Ascending aorta (tissue), 2 donors: ENCODE measurements at regions of chr16 and their contacts with region 1.

Region 1: DNA sequence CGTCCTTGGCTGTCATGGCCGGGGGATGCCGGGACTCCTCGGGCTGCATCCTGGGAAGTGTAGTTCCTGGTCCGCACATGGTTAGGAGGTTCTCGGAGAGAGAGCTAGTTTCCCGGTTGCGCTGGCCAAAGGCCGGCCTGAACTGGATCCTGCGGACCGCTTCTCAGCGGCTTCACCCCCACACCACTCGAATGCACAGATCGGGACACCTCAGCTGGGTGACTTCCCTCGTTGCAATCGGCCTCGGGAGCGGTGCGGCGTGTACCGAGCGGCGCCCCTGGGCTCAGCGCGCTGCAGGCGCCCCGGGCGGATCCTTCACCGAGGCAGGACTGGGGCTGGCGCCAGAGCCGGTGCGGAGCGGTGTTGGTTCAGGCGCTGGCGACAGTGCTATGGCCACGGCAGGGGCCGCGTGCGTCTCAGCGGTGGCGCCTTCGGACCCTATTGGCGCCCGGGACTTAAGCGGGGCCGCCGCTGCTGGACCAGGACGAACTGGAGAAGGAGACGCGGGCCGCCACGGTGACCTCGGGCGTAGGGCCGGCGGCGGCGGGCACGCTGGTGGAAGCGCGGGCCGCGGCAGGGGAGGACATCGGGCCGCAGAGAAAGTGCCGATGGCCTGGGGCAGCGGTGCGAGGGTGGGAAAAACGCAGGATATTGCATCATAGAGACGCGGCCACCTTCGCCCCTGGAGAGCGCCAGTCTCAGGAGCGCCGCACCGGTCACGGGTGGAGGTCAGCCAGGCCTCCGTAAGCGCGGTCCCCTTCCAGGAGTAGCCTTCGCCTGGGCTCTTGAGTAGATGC is 11.4 kb downstream of the ZNF629 start:
- DNase-seq: peak; percentile 32 to 90
- H3K4me3 ChIP-seq: peak overlapping the region; percentile 75 to 86
- H3K27ac ChIP-seq: peak overlapping the region; percentile 79 to 86
- H3K4me1 ChIP-seq: peaks cover 2 to 13% of the 10 kb centered on the region in 2 donors
- H3K27me3 ChIP-seq: no peaks in the 10 kb centered on the region
- CTCF ChIP-seq: no peak

Region 2: GRCh38 chr16:30557957-30558788 is 217.4 kb before region 1 on chr16 and contains the start of gene ZNF764:
- intact Hi-C with region 1: no loop called
- DNase-seq: peak; percentile 96 to 99
- H3K4me3 ChIP-seq: peak within 1 kb of the TSS; percentile 91
- H3K27ac ChIP-seq: peak within 1 kb of the TSS; percentile 92 to 94
- H3K4me1 ChIP-seq: peaks cover 9 to 10% of the 10 kb centered on the region in 2 donors
- H3K27me3 ChIP-seq: no peaks in the 10 kb centered on the region
- CTCF ChIP-seq: peak in 1 of 3 experiments; percentile 1
- total RNA-seq, gene ZNF764: 10.9 TPM

Region 3: GRCh38 chr16:30724641-30725417 is 50.8 kb before region 1 on chr16:
- intact Hi-C with region 1: no loop called
- DNase-seq: no peak
- H3K4me3 ChIP-seq: no peak overlapping the region
- H3K27ac ChIP-seq: peak overlapping the region in 1 of 2 donors; percentile 8
- H3K4me1 ChIP-seq: no peaks in the 10 kb centered on the region
- H3K27me3 ChIP-seq: no peaks in the 10 kb centered on the region
- CTCF ChIP-seq: no peak

Region 4: GRCh38 chr16:30813821-30814189 is 38.2 kb after region 1 on chr16:
- intact Hi-C with region 1: loop called (anchors 5 kb)
- DNase-seq: no peak
- H3K4me3 ChIP-seq: peak overlapping the region; percentile 58 to 66
- H3K27ac ChIP-seq: peak overlapping the region; percentile 56 to 79
- H3K4me1 ChIP-seq: peaks cover 5 to 8% of the 10 kb centered on the region in 2 donors
- H3K27me3 ChIP-seq: no peaks in the 10 kb centered on the region
- CTCF ChIP-seq: no peak

Region 5: GRCh38 chr16:30972872-30973271 is 197.3 kb after region 1 on chr16:
- intact Hi-C with region 1: no loop called
- DNase-seq: no peak
- H3K4me3 ChIP-seq: no peak overlapping the region
- H3K27ac ChIP-seq: no peak overlapping the region
- H3K4me1 ChIP-seq: no peaks in the 10 kb centered on the region
- H3K27me3 ChIP-seq: no peaks in the 10 kb centered on the region
- CTCF ChIP-seq: no peak